ENCODE measurements at regions of chr1 and their contacts with region 1.

Region 1: DNA sequence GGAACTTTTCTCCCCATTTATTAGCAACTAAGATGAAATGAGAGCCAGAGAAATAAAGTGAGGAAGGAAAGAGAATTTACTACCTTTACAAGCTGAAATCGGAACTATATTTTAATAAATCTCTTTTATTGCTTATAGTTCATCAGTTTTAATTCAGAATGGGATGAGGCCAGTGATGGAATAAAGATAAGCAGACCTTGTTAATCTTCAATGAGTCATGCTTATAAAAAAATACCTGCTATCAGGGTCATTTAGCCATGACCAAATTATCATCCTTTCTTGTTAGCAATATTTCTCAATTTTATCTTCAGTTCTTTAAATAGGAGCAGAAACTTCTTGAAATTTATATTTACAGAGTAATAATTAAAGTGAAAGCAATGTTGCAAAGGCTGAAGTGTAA is 26.1 kb downstream of the RGS4 start:
- DNase-seq: no peak
- H3K4me3 ChIP-seq: no peak overlapping the region
- H3K27ac ChIP-seq: no peak overlapping the region
- H3K4me1 ChIP-seq: no peaks in the 10 kb centered on the region
- CTCF ChIP-seq: no peak

Region 2: DNA sequence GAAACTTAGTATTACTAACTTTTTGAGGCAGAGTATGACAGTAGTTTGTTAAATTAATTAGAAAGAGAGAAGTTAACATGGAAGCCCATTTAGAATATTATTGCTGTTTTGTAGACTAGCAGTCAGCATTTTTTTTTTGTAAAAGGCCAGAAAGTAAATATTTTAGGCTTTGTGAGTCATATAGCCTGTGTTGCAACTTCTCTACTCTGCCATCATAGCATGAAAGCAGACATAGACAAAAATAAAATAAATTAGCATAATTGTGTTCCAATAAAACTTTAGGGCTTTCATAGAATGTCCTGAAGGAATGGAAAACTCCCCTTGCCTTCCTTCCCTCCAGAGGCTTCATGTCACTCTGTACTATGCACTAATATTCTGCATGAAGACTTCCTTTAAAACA is 38.4 kb before region 1 on chr1:
- CTCF ChIA-PET with region 1: no interaction called
- POLR2A ChIA-PET with region 1: no interaction called
- intact Hi-C with region 1: no loop called
- DNase-seq: no peak
- H3K4me3 ChIP-seq: no peak overlapping the region
- H3K27ac ChIP-seq: no peak overlapping the region
- H3K4me1 ChIP-seq: no peaks in the 10 kb centered on the region
- CTCF ChIP-seq: no peak

Region 3: DNA sequence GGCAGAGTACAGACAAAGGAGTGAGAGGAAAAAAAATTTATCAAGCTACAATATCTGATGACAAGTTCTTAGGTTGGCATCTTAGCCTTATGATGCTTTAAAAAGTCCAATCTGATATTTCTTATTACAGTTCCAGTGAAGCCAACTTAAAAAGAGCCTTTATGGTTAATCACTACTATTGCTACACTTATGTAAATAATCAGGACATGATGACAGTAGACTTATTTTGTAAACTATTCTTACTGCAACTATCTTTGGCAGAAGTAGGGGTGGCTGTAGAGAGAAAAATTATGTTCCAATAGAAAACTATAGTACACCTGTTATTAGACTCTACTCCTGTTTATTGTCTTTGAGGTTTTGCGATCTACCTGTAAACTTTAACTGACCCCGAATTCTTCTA is 200.7 kb after region 1 on chr1:
- CTCF ChIA-PET with region 1: no interaction called
- POLR2A ChIA-PET with region 1: no interaction called
- intact Hi-C with region 1: loop called (anchors 5 kb)
- DNase-seq: no peak
- H3K4me3 ChIP-seq: no peak overlapping the region
- H3K27ac ChIP-seq: no peak overlapping the region
- H3K4me1 ChIP-seq: no peaks in the 10 kb centered on the region
- CTCF ChIP-seq: no peak

Region 4: GRCh38 chr1:163315773-163316374 is 220.7 kb after region 1 on chr1:
- CTCF ChIA-PET with region 1: no interaction called
- POLR2A ChIA-PET with region 1: no interaction called
- intact Hi-C with region 1: no loop called
- DNase-seq: peak; percentile 62
- H3K4me3 ChIP-seq: no peak overlapping the region
- H3K27ac ChIP-seq: no peak overlapping the region
- H3K4me1 ChIP-seq: peaks cover 6% of the 10 kb centered on the region
- CTCF ChIP-seq: peak; percentile 98

Region 5: GRCh38 chr1:163673759-163674151 is 578.5 kb after region 1 on chr1:
- CTCF ChIA-PET with region 1: no interaction called
- POLR2A ChIA-PET with region 1: no interaction called
- intact Hi-C with region 1: no loop called
- DNase-seq: no peak
- H3K4me3 ChIP-seq: no peak overlapping the region
- H3K27ac ChIP-seq: no peak overlapping the region
- H3K4me1 ChIP-seq: no peaks in the 10 kb centered on the region
- CTCF ChIP-seq: no peak

Measured in OCI-LY7 (cell line).